ENCODE measurements at regions of chr1 and their contacts with region 1.

Region 1: DNA sequence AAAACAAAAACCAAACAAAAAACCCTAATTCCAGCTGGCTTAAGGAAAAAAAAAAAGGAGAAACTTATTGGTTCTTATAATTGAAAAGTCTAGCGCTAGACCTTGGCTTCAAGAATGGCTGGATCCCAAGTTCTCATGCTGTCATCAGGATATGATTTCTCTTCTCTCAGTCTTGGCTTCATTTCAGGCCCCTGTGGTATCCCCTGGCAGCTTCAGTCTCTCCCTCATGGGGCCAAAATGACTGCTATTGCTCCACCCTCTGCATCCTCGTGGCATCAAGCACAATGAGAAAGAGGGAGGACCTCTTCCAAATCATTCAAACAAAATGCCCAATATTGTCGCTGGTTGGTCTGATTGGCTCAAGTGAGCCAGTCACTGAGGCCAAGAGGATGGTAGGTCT is 80.7 kb downstream of the GIPC2 start:
- DNase-seq: no peak
- ATAC-seq: no peak
- H3K4me3 Mint-ChIP-seq: no peak overlapping the region
- H3K27ac Mint-ChIP-seq: no peak overlapping the region
- H3K4me1 Mint-ChIP-seq: no peaks in the 10 kb centered on the region
- H3K27me3 Mint-ChIP-seq: no peaks in the 10 kb centered on the region

Region 2: DNA sequence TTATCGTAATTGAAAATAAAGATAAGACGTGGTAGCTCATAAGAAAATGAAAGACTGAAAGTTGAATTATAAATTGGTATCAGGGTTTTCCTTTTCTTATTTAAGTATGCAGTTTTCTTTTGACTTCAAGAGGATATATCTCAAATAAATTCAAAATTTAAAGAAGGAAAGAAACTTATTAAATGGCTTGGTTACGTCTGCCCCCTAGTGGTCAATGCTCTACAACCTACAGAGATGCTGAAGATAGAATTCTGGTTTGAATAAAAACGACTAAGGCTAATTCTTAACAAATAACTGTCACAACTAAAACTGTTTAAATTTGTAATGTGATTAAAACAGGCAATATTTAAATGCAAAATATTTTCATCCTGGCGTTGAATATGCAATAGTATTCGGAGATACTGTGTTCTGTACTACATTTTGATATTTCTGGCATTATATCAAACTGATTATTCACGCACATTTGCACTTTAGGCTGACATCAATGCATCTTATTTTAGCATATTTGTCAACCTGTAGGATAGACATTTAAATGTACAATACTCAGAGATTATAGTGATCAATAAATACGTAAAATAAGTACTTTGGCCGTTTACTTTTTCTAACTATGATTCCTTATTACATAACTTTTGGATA is 550.0 kb after region 1 on chr1:
- CTCF ChIA-PET with region 1: interaction called, 9 read pairs
- POLR2A ChIA-PET with region 1: no interaction called
- intact Hi-C with region 1: loop called (anchors 1 kb)
- DNase-seq: peak; percentile 72
- ATAC-seq: no peak
- H3K4me3 Mint-ChIP-seq: no peak overlapping the region
- H3K27ac Mint-ChIP-seq: no peak overlapping the region
- H3K4me1 Mint-ChIP-seq: peaks cover 7% of the 10 kb centered on the region
- H3K27me3 Mint-ChIP-seq: peaks cover 2% of the 10 kb centered on the region